Dorsolateral prefrontal cortex (tissue), 120 donors: ENCODE measurements at regions of chr6 and their contacts with region 1.

Region 1: DNA sequence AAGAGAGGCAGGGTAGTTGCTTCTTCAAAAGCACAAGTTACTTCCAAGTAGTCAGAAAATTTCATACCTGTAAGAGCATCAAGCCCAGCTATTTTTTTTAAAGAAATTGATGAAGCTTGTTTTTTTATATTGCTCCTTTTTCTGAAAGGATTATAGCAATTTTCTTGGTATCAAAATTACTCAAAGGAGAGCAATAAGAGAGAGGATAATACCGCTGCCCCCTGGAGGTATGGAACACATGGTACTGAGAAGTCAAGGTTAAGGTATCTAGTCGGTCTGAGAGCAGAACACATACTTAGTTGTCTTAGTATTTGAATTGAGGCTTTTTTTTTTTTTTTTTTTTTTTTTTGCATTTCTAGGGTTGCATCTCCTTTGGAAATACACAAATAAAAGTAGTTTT is 59.4 kb downstream of the ADGRF5 start:
- DNase-seq: no peak
- H3K4me3 ChIP-seq: no peak overlapping the region
- H3K27ac ChIP-seq: no peak overlapping the region
- H3K27me3 ChIP-seq: no peaks in the 10 kb centered on the region
- CTCF ChIP-seq: no peak

Region 2: DNA sequence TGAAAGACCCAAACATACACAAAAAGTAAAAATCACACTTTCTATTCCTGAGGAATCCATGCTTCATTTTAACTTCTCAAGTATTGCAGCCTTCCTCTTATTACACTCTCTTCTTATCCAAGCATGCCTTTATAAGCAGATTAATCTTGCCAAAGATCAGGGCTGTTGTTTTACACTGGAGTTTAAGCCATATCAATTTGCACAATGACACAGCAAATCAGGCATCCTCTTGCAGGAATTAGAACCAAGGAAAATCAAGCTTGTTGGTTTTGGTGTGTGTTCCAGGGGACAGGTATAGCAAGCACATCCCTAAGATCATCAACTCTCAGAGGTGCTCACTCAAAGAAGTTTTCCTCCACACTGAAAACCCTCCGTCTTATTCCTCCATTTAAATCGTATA is 279.3 kb before region 1 on chr6:
- intact Hi-C with region 1: no loop called
- DNase-seq: no peak
- H3K4me3 ChIP-seq: no peak overlapping the region
- H3K27ac ChIP-seq: no peak overlapping the region
- H3K27me3 ChIP-seq: no peaks in the 10 kb centered on the region
- CTCF ChIP-seq: no peak

Region 3: GRCh38 chr6:47047479-47048407 is 185.4 kb after region 1 on chr6:
- intact Hi-C with region 1: loop called in 1 of 2 experiments (anchors 5 kb)
- DNase-seq: peak in 3 of 10 donors; percentile 38 to 54 (median 43)
- H3K4me3 ChIP-seq: peak overlapping the region in 1 of 59 donors; percentile 18
- H3K27ac ChIP-seq: peak overlapping the region in 1 of 59 donors; percentile 47
- H3K27me3 ChIP-seq: no peaks in the 10 kb centered on the region
- CTCF ChIP-seq: peak; percentile 61 to 90 (median 78)